ENCODE measurements at regions of chr5 and their contacts with region 1.

Region 1: GRCh38 chr5:143161893-143162540 is 241.5 kb downstream of the NR3C1 start:
- DNase-seq: peak in 1 of 5 donors; percentile 29
- H3K4me3 ChIP-seq: no peak overlapping the region
- H3K27ac ChIP-seq: no peak overlapping the region
- H3K4me1 ChIP-seq: no peaks in the 10 kb centered on the region
- H3K27me3 ChIP-seq: no peaks in the 10 kb centered on the region
- CTCF ChIP-seq: no peak
- EP300 ChIP-seq: no peak
- POLR2A ChIP-seq: no peak

Region 2: GRCh38 chr5:142699184-142699720 is 462.8 kb before region 1 on chr5:
- intact Hi-C with region 1: no loop called
- DNase-seq: peak; percentile 77 to 89 (median 87)
- H3K4me3 ChIP-seq: no peak overlapping the region
- H3K27ac ChIP-seq: no peak overlapping the region
- H3K4me1 ChIP-seq: peaks cover 11% of the 10 kb centered on the region
- H3K27me3 ChIP-seq: no peaks in the 10 kb centered on the region
- CTCF ChIP-seq: peak; percentile 59 to 91 (median 82)
- EP300 ChIP-seq: no peak
- POLR2A ChIP-seq: peak; percentile 24

Region 3: DNA sequence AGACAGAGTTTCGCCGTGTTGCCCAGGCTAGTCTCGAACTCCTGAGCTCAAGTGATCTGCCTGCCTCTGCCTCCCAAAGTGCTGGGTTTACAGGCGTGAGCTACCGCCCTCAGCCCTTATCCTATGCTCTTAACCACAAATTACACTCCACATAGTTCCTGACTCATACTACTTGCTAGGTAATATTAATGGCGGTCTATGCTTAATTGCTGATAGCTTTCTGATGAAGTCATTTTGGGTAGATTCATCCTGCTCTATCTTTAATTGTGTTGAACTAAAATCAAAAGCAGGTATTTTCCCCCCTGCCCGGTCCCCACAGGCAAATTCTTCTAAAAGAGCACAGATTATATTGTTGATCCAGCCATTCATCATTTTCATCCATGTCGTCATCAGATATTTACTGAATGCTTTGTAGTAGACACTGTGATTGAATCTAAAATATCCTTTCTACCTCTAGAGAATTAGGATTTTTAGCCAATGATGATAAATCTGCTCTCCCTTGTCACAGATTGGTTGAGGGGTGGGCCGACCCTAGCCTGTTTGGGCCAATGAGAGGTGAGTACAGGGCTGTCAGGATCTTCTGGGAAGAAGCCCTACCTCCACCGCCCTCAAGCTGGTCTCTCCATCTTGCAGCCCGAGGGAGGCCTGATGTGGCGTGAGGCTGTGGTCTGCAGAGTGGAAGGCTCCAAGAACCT is 96.7 kb after region 1 on chr5:
- intact Hi-C with region 1: loop called in 1 of 4 experiments (anchors 5 kb)
- DNase-seq: no peak
- H3K4me3 ChIP-seq: no peak overlapping the region
- H3K27ac ChIP-seq: no peak overlapping the region
- H3K4me1 ChIP-seq: no peaks in the 10 kb centered on the region
- H3K27me3 ChIP-seq: no peaks in the 10 kb centered on the region
- CTCF ChIP-seq: no peak
- EP300 ChIP-seq: no peak
- POLR2A ChIP-seq: no peak

Measured in ovary (tissue), 10 donors.